Activated CD4-positive, alpha-beta T cell treated with anti-CD3 and anti-CD28 coated beads for 36 hours (primary cell): ENCODE measurements at regions of chr7 and their contacts with region 1.

Region 1: GRCh38 chr7:8217200-8218068 is 44.5 kb downstream of the ICA1 start:
- DNase-seq: no peak
- ATAC-seq: peak; percentile 49
- H3K4me3 Mint-ChIP-seq: no peak overlapping the region
- H3K27ac Mint-ChIP-seq: no peak overlapping the region
- H3K4me1 Mint-ChIP-seq: peaks cover 2% of the 10 kb centered on the region
- H3K27me3 Mint-ChIP-seq: no peaks in the 10 kb centered on the region

Region 2: DNA sequence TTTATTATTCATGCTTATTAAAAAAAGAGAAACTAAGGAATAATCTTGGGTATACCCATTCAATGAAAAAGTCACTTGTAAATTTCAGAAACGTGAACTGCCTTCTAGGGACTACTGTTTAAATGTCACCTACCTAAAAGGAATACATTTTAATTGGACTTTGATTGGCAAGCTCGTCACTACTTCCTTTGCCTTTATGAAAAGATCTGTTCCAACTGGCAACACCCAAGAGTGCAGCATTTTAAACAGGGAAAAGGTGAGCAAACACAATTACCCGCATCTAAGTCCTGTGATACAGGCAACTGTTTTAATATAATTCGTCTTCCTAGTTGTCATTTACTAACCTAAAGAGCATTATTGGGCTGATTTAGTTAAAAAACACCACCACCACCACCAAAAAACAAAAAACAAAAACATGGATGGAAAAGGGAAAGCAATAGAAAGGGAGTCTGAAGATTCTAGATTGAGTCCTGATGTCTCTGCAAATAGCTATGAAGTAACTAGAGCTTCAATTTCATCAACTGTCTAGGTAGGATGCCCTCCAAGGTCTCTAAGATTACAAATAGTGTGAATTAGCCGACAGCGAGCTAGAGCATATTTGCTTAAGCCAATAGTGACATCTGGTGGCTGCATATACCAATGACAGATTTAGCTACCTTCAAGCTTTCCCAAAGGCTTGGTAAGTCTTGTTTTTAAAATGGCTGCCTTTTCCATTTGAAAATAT is 78.4 kb after region 1 on chr7:
- CTCF ChIA-PET with region 1: interaction called, 21 read pairs
- POLR2A ChIA-PET with region 1: no interaction called
- intact Hi-C with region 1: loop called in 1 of 2 experiments (anchors 2 kb)
- DNase-seq: peak; percentile 25
- ATAC-seq: peak; percentile 80
- H3K4me3 Mint-ChIP-seq: no peak overlapping the region
- H3K27ac Mint-ChIP-seq: no peak overlapping the region
- H3K4me1 Mint-ChIP-seq: peaks cover 2% of the 10 kb centered on the region
- H3K27me3 Mint-ChIP-seq: peaks cover 10% of the 10 kb centered on the region